AG04450 (cell line): ENCODE measurements at regions of chr2 and their contacts with region 1.

Region 1: DNA sequence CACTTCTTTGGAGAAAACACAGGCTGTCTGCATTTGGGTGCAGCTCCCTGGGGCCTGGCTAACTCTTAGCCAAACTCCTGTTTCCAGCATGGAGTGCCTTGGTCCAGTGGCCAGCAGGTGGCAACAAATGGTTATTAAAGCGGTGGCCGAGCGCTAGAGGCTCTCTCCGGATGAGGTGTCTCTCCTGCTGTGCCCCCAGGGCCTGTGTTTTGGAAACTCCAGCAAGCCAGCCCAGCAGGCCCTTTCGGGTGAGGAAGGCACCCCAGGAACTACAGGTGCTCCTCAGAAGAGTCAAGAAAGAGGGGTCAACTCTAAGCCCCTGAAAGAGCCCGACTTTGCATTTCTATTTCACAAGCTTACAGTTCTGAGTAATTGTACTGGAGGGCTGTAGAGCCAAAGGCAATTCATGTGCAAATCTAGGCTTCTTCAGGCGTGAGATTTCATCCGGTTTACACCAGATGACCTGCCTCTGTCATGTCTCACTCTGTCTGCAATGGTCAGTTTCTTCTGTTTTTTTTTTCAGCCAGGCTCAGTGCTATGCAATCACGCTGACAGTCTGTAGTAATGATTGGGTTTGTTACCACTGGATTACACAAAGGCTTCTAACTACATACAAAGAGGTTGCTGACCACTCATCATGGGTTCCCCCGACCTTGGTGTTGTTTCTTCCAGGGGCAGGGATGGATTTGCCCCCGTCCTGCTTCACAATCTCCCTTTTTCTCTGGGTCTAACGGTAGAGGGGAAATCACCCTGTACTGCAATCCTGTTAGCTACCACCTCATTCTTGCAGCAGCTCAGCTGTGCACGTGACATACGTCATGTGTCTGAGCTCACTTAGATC is 7.6 kb upstream of the CHRNA1 start:
- DNase-seq: no peak
- H3K4me3 ChIP-seq: no peak overlapping the region
- H3K27ac ChIP-seq: peak overlapping the region; percentile 90
- H3K27me3 ChIP-seq: no peaks in the 10 kb centered on the region
- CTCF ChIP-seq: peak; percentile 95

Region 2: DNA sequence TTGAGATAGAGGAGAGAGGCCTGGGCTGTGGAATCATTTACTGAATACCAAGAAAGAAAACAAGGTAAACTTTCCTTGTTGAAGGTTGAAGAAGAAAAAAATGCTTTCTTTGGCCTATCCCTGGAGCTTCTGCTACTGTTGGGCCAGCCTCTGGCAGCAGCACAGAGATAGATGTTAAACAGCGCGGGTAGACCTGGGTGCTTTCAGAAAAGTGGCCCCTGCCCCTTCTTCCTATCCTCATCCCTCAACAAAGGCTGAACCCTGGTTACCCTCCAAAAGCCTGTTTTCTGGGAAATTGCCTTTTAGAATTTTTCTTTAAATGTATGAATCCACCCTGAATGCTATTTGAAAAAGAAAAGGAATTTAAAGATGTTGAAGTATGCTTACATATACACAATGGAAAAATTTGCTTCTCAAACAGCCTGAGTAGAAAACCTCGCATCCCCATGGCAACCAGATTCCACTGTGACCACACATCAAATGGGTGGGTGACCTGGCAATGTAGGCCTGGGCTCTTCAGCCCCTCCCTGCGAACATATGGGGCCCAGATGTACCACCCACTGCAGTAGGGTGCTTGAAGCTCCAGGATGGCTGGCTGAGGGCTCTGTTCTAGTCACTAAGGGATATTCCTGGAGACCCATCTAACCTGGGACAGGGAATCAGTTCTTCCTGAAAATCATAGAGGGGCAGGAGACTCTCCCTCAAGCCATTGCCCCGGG is 15.8 kb after region 1 on chr2:
- CTCF ChIA-PET with region 1: interaction called, 23 read pairs
- POLR2A ChIA-PET with region 1: interaction called, 12 read pairs
- DNase-seq: peak; percentile 99
- H3K4me3 ChIP-seq: no peak overlapping the region
- H3K27ac ChIP-seq: peak overlapping the region; percentile 99
- H3K27me3 ChIP-seq: no peaks in the 10 kb centered on the region
- CTCF ChIP-seq: no peak

Region 3: GRCh38 chr2:174800436-174801205 is 28.8 kb after region 1 on chr2:
- CTCF ChIA-PET with region 1: interaction called, 23 read pairs
- POLR2A ChIA-PET with region 1: no interaction called
- DNase-seq: no peak
- H3K4me3 ChIP-seq: no peak overlapping the region
- H3K27ac ChIP-seq: peak overlapping the region; percentile 83
- H3K27me3 ChIP-seq: no peaks in the 10 kb centered on the region
- CTCF ChIP-seq: no peak

Region 4: DNA sequence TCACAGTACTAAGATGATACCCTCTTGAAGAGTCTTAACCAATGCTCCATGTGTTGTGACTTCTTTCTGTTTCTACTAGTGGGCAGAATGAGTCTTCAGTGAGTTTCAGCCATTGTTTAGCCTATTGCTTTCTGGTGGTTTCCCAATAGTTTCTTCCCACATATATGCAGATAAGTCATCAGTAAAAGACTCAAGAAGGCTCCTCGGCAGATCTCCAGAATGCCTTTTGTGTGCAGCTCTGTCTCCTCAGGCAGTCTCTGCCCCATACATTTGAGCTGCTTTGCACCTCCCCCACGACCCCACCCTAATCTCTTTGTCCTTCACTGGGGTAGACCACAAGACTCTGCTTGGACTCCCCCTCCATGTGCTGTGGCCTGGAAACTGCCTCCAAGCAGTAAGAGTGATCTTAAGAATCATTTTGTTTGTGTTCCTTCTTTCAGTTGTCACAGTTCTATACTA is 64.0 kb after region 1 on chr2:
- CTCF ChIA-PET with region 1: interaction called, 16 read pairs
- POLR2A ChIA-PET with region 1: no interaction called
- DNase-seq: peak; percentile 86
- H3K4me3 ChIP-seq: no peak overlapping the region
- H3K27ac ChIP-seq: peak overlapping the region; percentile 81
- H3K27me3 ChIP-seq: no peaks in the 10 kb centered on the region
- CTCF ChIP-seq: no peak

Region 5: DNA sequence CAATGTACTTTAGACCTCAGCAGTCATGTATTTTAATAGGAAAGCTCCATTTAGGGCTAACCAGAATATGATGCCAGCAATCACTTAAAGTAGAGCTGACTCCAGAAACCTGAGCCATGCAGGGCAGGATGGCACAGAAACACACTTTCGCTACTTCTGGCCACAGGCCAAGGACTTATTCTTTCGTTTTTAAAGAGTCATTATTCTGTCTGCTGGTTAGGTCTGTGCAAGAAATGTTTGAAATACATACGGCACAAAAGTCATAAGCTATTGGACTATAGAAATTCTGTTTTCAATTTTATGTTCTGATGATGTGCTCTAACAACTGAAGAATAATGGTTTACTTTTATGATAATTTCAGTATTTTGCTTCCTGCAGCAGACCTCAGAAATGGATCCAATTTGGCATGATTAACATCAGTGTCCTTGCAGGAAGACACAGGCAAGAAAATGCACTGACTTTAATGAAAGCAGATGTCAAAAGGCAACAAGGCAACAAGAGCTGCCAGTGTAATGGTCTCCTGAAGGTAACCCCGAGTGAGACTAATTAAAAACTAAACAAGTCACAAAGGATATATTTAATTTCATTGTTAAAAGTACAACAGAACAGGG is 106.8 kb after region 1 on chr2:
- CTCF ChIA-PET with region 1: interaction called, 17 read pairs
- POLR2A ChIA-PET with region 1: interaction called, 5 read pairs
- DNase-seq: no peak
- H3K4me3 ChIP-seq: peak overlapping the region; percentile 47
- H3K27ac ChIP-seq: no peak overlapping the region
- H3K27me3 ChIP-seq: no peaks in the 10 kb centered on the region
- CTCF ChIP-seq: no peak

Region 6: GRCh38 chr2:175383286-175383685 is 611.4 kb after region 1 on chr2:
- CTCF ChIA-PET with region 1: no interaction called
- POLR2A ChIA-PET with region 1: no interaction called
- DNase-seq: no peak
- H3K4me3 ChIP-seq: no peak overlapping the region
- H3K27ac ChIP-seq: no peak overlapping the region
- H3K27me3 ChIP-seq: no peaks in the 10 kb centered on the region
- CTCF ChIP-seq: no peak